Mammary epithelial cell (primary cell): ENCODE measurements at regions of chr10 and their contacts with region 1.

Region 1: GRCh38 chr10:92567952-92568600 is 5.8 kb downstream of the IDE start:
- DNase-seq: peak; percentile 65
- H3K4me3 ChIP-seq: no peak overlapping the region
- H3K27ac ChIP-seq: no peak overlapping the region
- H3K4me1 ChIP-seq: peaks cover 21% of the 10 kb centered on the region
- H3K27me3 ChIP-seq: no peaks in the 10 kb centered on the region
- CTCF ChIP-seq: no peak

Region 2: DNA sequence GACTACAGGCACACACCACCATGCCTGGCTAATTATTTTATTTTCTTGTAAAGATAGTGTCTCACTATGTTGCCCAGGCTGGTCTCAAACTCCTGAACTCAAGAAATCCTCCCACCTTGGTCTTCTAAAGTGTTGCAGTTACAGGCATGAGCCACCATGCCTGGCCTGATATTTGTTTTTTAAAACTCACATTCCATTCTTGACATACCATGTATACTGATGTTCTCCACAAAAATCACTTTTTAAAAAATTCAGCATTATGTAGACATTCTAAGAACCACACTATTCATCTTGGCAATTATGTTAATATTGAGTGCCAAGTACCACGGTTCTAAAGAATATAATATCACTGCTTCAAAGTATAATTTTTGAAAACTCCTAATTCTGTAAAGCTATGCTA is 37.7 kb before region 1 on chr10:
- CTCF ChIA-PET with region 1: interaction called, 12 read pairs
- dilution Hi-C with region 1: no loop called
- in situ Hi-C with region 1: no loop called
- intact Hi-C with region 1: no loop called
- DNase-seq: no peak
- H3K4me3 ChIP-seq: no peak overlapping the region
- H3K27ac ChIP-seq: no peak overlapping the region
- H3K4me1 ChIP-seq: no peaks in the 10 kb centered on the region
- H3K27me3 ChIP-seq: no peaks in the 10 kb centered on the region
- CTCF ChIP-seq: no peak

Region 3: DNA sequence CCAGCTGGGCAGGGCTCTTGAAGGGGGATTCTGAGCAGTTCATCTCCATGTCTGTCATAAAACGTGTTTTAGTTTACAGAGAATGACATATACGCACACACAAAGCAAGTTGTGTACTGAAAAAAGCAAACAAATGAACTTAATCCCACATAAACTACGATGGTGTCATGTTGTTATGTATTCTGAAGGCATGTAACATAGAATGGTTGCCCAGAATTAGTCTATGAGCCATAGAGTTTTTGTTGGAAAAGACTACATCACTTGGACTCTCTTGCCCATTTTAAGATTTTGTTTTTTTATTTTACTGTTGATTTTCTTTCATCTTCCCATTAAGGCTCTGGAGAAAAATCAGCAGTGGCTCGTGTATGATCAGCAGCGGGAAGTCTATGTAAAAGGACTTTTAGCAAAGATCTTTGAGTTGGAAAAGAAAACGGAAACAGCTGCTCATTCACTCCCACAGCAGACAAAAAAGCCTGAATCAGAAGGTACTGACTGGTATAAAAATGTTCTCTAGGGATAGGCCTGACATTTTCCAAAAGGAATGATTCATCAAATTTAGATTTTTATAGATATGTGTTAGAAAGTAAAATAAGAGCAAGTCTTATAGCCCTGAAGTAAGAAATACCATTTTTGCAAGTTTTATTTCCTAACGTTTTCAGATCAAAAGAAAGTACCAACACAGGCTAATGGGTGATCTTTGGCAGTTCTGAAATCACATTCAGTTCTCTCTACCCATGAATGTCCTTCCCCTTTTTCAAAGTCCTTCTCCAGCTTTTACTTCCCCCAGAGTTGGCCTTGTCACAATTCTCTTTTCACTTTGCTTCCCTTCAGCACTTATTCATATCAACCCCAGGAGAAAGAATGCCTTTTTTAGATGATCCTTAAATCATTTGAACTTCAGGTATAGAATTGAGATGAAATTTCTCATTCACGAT is 947.3 kb after region 1 on chr10:
- CTCF ChIA-PET with region 1: no interaction called
- dilution Hi-C with region 1: no loop called
- in situ Hi-C with region 1: no loop called
- intact Hi-C with region 1: no loop called
- DNase-seq: no peak
- H3K4me3 ChIP-seq: no peak overlapping the region
- H3K27ac ChIP-seq: no peak overlapping the region
- H3K4me1 ChIP-seq: no peaks in the 10 kb centered on the region
- H3K27me3 ChIP-seq: no peaks in the 10 kb centered on the region
- CTCF ChIP-seq: no peak